ENCODE measurements at regions of chr6 and their contacts with region 1.

Region 1: GRCh38 chr6:16238057-16238962 is at the start of gene GMPR:
- DNase-seq: peak; percentile 80
- H3K4me3 Mint-ChIP-seq: peak within 1 kb of the TSS; percentile 72
- H3K27ac Mint-ChIP-seq: peak within 1 kb of the TSS; percentile 79
- H3K4me1 Mint-ChIP-seq: peaks cover 27% of the 10 kb centered on the region
- H3K27me3 Mint-ChIP-seq: peaks cover 30% of the 10 kb centered on the region
- total RNA-seq, gene GMPR: 2.6 to 3.3 TPM

Region 2: GRCh38 chr6:15901141-15902115 is 336.9 kb before region 1 on chr6:
- CTCF ChIA-PET with region 1: no interaction called
- POLR2A ChIA-PET with region 1: interaction called, 10 read pairs
- DNase-seq: peak; percentile 32
- H3K4me3 Mint-ChIP-seq: no peak overlapping the region
- H3K27ac Mint-ChIP-seq: peak overlapping the region; percentile 71
- H3K4me1 Mint-ChIP-seq: peaks cover 31% of the 10 kb centered on the region
- H3K27me3 Mint-ChIP-seq: no peaks in the 10 kb centered on the region

Region 3: DNA sequence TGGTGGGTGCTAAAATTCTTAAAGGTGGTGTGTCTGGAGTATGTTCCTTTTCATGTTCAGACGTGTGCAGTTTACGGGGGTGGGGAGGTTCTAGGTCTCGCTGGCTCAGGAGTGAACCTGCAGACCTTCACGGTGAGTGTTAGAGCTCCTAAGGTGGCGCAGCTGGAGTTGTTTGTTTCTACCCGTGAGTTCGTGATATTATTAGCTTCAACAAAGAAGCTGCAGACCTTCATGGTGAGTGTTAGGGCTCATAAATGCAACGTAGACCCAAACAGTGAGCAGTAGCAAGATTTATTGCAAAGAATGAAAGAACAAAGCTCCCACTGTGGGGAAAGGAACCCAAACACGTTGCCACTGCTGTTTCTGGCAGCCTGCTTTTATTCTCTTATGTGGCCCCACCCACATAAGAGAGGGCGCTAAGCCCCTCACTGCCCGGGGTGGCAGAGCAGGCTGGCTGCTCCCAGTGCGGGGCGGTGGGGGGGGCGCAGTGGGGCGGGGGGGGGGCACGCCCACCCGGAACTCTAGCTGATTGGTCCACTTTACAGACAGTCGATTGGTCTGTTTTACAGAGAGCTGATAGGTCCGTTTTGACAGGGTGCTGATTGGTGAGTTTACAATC is 41.2 kb before region 1 on chr6:
- CTCF ChIA-PET with region 1: no interaction called
- POLR2A ChIA-PET with region 1: no interaction called
- DNase-seq: no peak
- H3K4me3 Mint-ChIP-seq: no peak overlapping the region
- H3K27ac Mint-ChIP-seq: no peak overlapping the region
- H3K4me1 Mint-ChIP-seq: no peaks in the 10 kb centered on the region
- H3K27me3 Mint-ChIP-seq: peaks cover 16% of the 10 kb centered on the region

Measured in activated CD4-positive, alpha-beta T cell treated with anti-CD3 and anti-CD28 coated beads, Interleukin-2, amount 10 ng/mL, durations not matched to agents 7 days and 5 days (primary cell).